Heart left ventricle (tissue), 16 donors: ENCODE measurements at regions of chr11 and their contacts with region 1.

Region 1: GRCh38 chr11:65711785-65712632 is at the start of gene KAT5:
- DNase-seq: peak; percentile 98 to 99 (median 99)
- ATAC-seq: peak; percentile 90 to 95 (median 94)
- H3K4me3 ChIP-seq: peak within 1 kb of the TSS; percentile 36 to 90 (median 72)
- H3K27ac ChIP-seq: peak within 1 kb of the TSS; percentile 94 to 100 (median 99)
- H3K4me1 ChIP-seq: peaks cover 0 to 22% (median 15%) of the 10 kb centered on the region in 12 donors
- H3K27me3 ChIP-seq: no peaks in the 10 kb centered on the region
- CTCF ChIP-seq: peak; percentile 93 to 99 (median 98)
- POLR2A ChIP-seq: peak in 1 of 2 donors; percentile 49
- total RNA-seq, gene KAT5: 36.4 to 52.5 (median 40.1) TPM

Region 2: GRCh38 chr11:65604258-65604657 is 107.8 kb before region 1 on chr11:
- intact Hi-C with region 1: no loop called
- DNase-seq: no peak
- ATAC-seq: no peak
- H3K4me3 ChIP-seq: no peak overlapping the region
- H3K27ac ChIP-seq: no peak overlapping the region
- H3K4me1 ChIP-seq: peaks cover 4 to 48% (median 25%) of the 10 kb centered on the region in 12 donors
- H3K27me3 ChIP-seq: no peaks in the 10 kb centered on the region
- CTCF ChIP-seq: no peak
- POLR2A ChIP-seq: no peak

Region 3: GRCh38 chr11:65615229-65615941 is 96.6 kb before region 1 on chr11 and contains the start of gene PCNX3:
- intact Hi-C with region 1: loop called in 3 of 10 experiments (anchors 10 kb)
- DNase-seq: peak; percentile 100
- ATAC-seq: peak; percentile 86 to 90 (median 88)
- H3K4me3 ChIP-seq: peak within 1 kb of the TSS; percentile 89 to 100 (median 96)
- H3K27ac ChIP-seq: peak within 1 kb of the TSS; percentile 95 to 99 (median 97)
- H3K4me1 ChIP-seq: peaks cover 5 to 57% (median 34%) of the 10 kb centered on the region in 12 donors
- H3K27me3 ChIP-seq: no peaks in the 10 kb centered on the region
- CTCF ChIP-seq: no peak
- POLR2A ChIP-seq: peak in 1 of 2 donors; percentile 68
- total RNA-seq, gene PCNX3: 9.5 to 23.4 (median 15.4) TPM

Region 4: GRCh38 chr11:65652511-65653231 is 59.3 kb before region 1 on chr11:
- intact Hi-C with region 1: no loop called
- DNase-seq: peak; percentile 96 to 98 (median 97)
- ATAC-seq: peak; percentile 82 to 93 (median 90)
- H3K4me3 ChIP-seq: peak overlapping the region; percentile 1 to 66 (median 60)
- H3K27ac ChIP-seq: peak overlapping the region; percentile 89 to 99 (median 96)
- H3K4me1 ChIP-seq: peaks cover 8 to 65% (median 40%) of the 10 kb centered on the region in 12 donors
- H3K27me3 ChIP-seq: no peaks in the 10 kb centered on the region
- CTCF ChIP-seq: peak in 2 of 12 donors; percentile 17 to 22
- POLR2A ChIP-seq: peak in 1 of 2 donors; percentile 72

Region 5: DNA sequence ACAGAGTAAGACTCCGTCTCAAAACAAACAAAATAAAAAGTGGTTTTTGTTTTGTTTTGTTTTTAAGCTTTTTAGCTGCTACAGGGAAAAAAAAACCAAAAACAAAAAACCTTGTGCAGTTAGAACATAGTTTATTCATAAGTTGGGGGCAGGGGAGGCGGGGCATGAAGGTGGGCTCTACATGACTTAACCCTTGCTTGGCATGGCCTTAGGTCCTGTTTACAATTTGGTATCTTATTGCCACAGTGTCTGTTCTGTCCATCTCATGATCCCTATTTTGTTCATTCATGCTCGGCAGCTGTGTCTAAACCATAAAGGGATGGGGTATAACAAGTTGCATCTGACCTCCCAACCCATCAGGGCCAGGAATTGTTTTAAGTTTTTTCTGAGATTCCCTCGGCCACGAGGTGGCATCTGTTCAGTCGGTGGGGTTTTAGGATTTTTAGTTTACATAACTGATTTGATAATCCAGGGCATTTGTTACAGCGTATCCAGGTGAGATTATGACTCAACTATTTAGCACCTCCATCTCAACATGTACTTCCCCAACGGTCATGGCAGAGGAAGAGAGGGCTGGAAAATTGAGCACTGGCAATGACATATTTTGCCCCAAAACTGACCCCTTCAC is 61.9 kb after region 1 on chr11:
- intact Hi-C with region 1: loop called in 3 of 10 experiments (anchors 5 to 10 kb)
- DNase-seq: no peak
- ATAC-seq: no peak
- H3K4me3 ChIP-seq: no peak overlapping the region
- H3K27ac ChIP-seq: no peak overlapping the region
- H3K4me1 ChIP-seq: peaks cover 0 to 59% (median 0%) of the 10 kb centered on the region in 12 donors
- H3K27me3 ChIP-seq: no peaks in the 10 kb centered on the region
- CTCF ChIP-seq: no peak
- POLR2A ChIP-seq: no peak

Region 6: GRCh38 chr11:65810046-65810868 is 98.2 kb after region 1 on chr11:
- intact Hi-C with region 1: loop called in 5 of 10 experiments (anchors 2 to 5 kb)
- DNase-seq: no peak
- ATAC-seq: peak in 1 of 4 donors; percentile 42
- H3K4me3 ChIP-seq: no peak overlapping the region
- H3K27ac ChIP-seq: no peak overlapping the region
- H3K4me1 ChIP-seq: peaks cover 0 to 23% (median 0%) of the 10 kb centered on the region in 12 donors
- H3K27me3 ChIP-seq: peaks cover 0 to 23% (median 6%) of the 10 kb centered on the region in 9 donors
- CTCF ChIP-seq: no peak
- POLR2A ChIP-seq: no peak

Region 7: GRCh38 chr11:65988791-65989592 is 277.0 kb after region 1 on chr11:
- intact Hi-C with region 1: loop called (anchors 1 to 10 kb)
- DNase-seq: peak in 4 of 5 donors; percentile 86 to 89 (median 88)
- ATAC-seq: peak; percentile 95 to 98 (median 98)
- H3K4me3 ChIP-seq: no peak overlapping the region
- H3K27ac ChIP-seq: peak overlapping the region in 1 of 12 donors; percentile 43
- H3K4me1 ChIP-seq: peaks cover 0 to 6% (median 0%) of the 10 kb centered on the region in 12 donors
- H3K27me3 ChIP-seq: no peaks in the 10 kb centered on the region
- CTCF ChIP-seq: peak; percentile 85 to 98 (median 92)
- POLR2A ChIP-seq: no peak